ENCODE measurements at regions of chr5 and their contacts with region 1.

Region 1: GRCh38 chr5:56415356-56415765 is 182.2 kb upstream of the ANKRD55 start:
- DNase-seq: peak; percentile 89
- ATAC-seq: peak; percentile 71
- H3K4me3 ChIP-seq: peak overlapping the region in 3 of 5 experiments; percentile 21 to 56 (median 21)
- H3K4me3 Mint-ChIP-seq: peak overlapping the region; percentile 76
- H3K27ac ChIP-seq: peak overlapping the region; percentile 95 to 98
- H3K27ac Mint-ChIP-seq: peak overlapping the region; percentile 96
- H3K4me1 ChIP-seq: peaks cover 73 to 74% of the 10 kb centered on the region in 2 donors
- H3K4me1 Mint-ChIP-seq: peaks cover 80% of the 10 kb centered on the region
- H3K27me3 ChIP-seq: no peaks in the 10 kb centered on the region
- H3K27me3 Mint-ChIP-seq: no peaks in the 10 kb centered on the region
- CTCF ChIP-seq: no peak

Region 2: GRCh38 chr5:56142620-56143372 is 272.6 kb before region 1 on chr5:
- CTCF ChIA-PET with region 1: no interaction called
- POLR2A ChIA-PET with region 1: no interaction called
- intact Hi-C with region 1: no loop called
- DNase-seq: no peak
- ATAC-seq: no peak
- H3K4me3 ChIP-seq: no peak overlapping the region
- H3K4me3 Mint-ChIP-seq: no peak overlapping the region
- H3K27ac ChIP-seq: no peak overlapping the region
- H3K27ac Mint-ChIP-seq: no peak overlapping the region
- H3K4me1 ChIP-seq: peaks cover 0 to 2% of the 10 kb centered on the region in 2 donors
- H3K4me1 Mint-ChIP-seq: no peaks in the 10 kb centered on the region
- H3K27me3 ChIP-seq: no peaks in the 10 kb centered on the region
- H3K27me3 Mint-ChIP-seq: peaks cover 11% of the 10 kb centered on the region
- CTCF ChIP-seq: no peak

Region 3: DNA sequence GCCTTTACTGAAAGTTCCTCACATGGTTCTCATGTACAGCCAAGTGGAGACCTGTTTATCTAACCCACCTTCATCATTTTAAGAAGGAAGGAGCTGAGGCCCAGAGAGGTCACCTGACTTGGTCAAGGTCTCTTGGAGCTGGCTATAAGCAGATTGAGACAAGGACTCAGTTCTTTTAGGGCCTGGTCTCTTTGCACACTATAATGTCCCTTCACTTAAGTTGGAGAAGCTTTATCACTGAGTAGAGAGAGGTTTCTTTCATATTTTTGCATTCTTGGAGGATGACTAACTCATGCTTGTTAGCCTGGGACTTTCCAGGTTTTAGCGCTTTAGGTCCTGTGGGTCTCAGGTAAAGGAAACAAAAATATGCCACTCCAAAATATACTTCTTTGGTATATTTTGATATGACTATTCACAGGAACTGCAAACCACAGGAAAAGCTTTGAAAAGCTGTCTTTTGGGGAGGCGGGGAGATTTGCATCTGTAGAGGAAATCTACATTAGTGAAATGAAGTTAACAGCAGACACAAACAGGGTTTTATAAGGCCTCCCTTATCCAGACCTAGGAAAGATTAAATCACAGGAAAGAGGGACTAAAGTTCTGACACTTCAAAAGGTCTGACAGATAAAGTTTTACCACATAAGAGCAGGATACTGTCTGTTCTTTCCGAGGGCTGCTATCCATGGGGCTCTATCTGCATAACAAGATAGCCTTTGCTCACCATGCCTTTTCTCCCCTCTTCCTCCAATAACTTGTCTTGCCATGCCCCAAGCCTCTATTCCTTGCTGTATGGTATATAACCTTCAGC is 86.4 kb before region 1 on chr5:
- CTCF ChIA-PET with region 1: interaction called, 3 read pairs
- POLR2A ChIA-PET with region 1: interaction called, 3 read pairs
- intact Hi-C with region 1: loop called (anchors 5 kb)
- DNase-seq: peak; percentile 59
- ATAC-seq: peak; percentile 76
- H3K4me3 ChIP-seq: peak overlapping the region in 1 of 5 experiments; percentile 46
- H3K4me3 Mint-ChIP-seq: peak overlapping the region; percentile 47
- H3K27ac ChIP-seq: peak overlapping the region; percentile 77 to 92
- H3K27ac Mint-ChIP-seq: peak overlapping the region; percentile 91
- H3K4me1 ChIP-seq: peaks cover 41 to 47% of the 10 kb centered on the region in 2 donors
- H3K4me1 Mint-ChIP-seq: peaks cover 60% of the 10 kb centered on the region
- H3K27me3 ChIP-seq: no peaks in the 10 kb centered on the region
- H3K27me3 Mint-ChIP-seq: no peaks in the 10 kb centered on the region
- CTCF ChIP-seq: no peak

Region 4: GRCh38 chr5:56565644-56566043 is 150.3 kb after region 1 on chr5:
- CTCF ChIA-PET with region 1: no interaction called
- POLR2A ChIA-PET with region 1: no interaction called
- intact Hi-C with region 1: loop called (anchors 2 kb)
- DNase-seq: peak; percentile 82
- ATAC-seq: peak; percentile 97
- H3K4me3 ChIP-seq: peak overlapping the region in 3 of 5 experiments; percentile 6 to 20 (median 9)
- H3K4me3 Mint-ChIP-seq: peak overlapping the region; percentile 56
- H3K27ac ChIP-seq: no peak overlapping the region
- H3K27ac Mint-ChIP-seq: peak overlapping the region; percentile 69
- H3K4me1 ChIP-seq: peaks cover 34 to 35% of the 10 kb centered on the region in 2 donors
- H3K4me1 Mint-ChIP-seq: peaks cover 41% of the 10 kb centered on the region
- H3K27me3 ChIP-seq: no peaks in the 10 kb centered on the region
- H3K27me3 Mint-ChIP-seq: no peaks in the 10 kb centered on the region
- CTCF ChIP-seq: no peak

Region 5: DNA sequence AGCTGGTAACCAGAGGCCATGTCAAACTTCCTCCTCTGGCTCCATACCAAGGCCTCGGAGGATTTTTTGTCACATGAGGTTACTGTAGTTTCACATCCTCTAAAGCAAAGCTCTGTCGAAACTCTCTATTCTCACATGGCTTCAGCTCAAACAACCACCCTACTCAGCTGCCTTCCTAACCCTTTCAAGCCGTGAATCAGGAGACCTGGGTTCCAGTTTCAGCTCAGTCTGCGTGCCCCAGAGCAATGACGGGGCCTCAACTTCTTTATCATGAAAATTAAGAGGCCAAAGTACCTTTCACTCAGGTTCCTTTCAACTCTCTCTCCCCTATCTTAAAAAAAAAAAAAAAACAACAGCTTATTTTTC is 254.7 kb after region 1 on chr5:
- CTCF ChIA-PET with region 1: interaction called, 3 read pairs
- POLR2A ChIA-PET with region 1: interaction called, 5 read pairs
- intact Hi-C with region 1: loop called (anchors 2 kb)
- DNase-seq: peak; percentile 95
- ATAC-seq: no peak
- H3K4me3 ChIP-seq: no peak overlapping the region
- H3K4me3 Mint-ChIP-seq: peak overlapping the region; percentile 75
- H3K27ac ChIP-seq: peak overlapping the region; percentile 97 to 98
- H3K27ac Mint-ChIP-seq: peak overlapping the region; percentile 97
- H3K4me1 ChIP-seq: peaks cover 58% of the 10 kb centered on the region in 2 donors
- H3K4me1 Mint-ChIP-seq: peaks cover 74% of the 10 kb centered on the region
- H3K27me3 ChIP-seq: no peaks in the 10 kb centered on the region
- H3K27me3 Mint-ChIP-seq: no peaks in the 10 kb centered on the region
- CTCF ChIP-seq: no peak

Region 6: GRCh38 chr5:56814963-56815658 is 399.8 kb after region 1 on chr5 and contains the start of gene MAP3K1:
- CTCF ChIA-PET with region 1: interaction called, 3 read pairs
- POLR2A ChIA-PET with region 1: no interaction called
- intact Hi-C with region 1: loop called (anchors 1 kb)
- DNase-seq: peak; percentile 93
- ATAC-seq: peak; percentile 65
- H3K4me3 ChIP-seq: peak within 1 kb of the TSS; percentile 73 to 97 (median 87)
- H3K4me3 Mint-ChIP-seq: peak within 1 kb of the TSS; percentile 97
- H3K27ac ChIP-seq: peak within 1 kb of the TSS; percentile 91 to 94
- H3K27ac Mint-ChIP-seq: peak within 1 kb of the TSS; percentile 99
- H3K4me1 ChIP-seq: peaks cover 25 to 29% of the 10 kb centered on the region in 2 donors
- H3K4me1 Mint-ChIP-seq: peaks cover 44% of the 10 kb centered on the region
- H3K27me3 ChIP-seq: no peaks in the 10 kb centered on the region
- H3K27me3 Mint-ChIP-seq: no peaks in the 10 kb centered on the region
- CTCF ChIP-seq: no peak
- total RNA-seq, gene MAP3K1: 160 and 164 TPM in 2 replicates

Region 7: DNA sequence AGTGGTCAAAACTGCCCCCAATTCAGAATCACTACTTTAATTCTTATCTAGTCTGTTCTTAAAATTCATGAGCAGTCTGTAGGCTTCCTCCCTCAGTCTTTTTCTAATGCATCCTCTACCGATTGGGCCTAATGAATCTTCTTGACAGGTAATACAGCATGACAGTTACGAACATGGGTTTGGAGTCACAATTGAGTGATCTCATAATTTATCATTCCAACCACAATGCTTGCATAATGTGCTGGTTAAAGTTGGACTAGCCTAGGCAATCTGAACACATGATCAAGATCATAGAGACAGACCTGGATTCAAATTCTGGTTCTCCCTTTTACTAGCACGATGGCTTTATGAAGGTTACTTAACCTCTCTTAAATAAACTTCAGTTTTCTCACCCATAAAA is 461.0 kb after region 1 on chr5:
- CTCF ChIA-PET with region 1: no interaction called
- POLR2A ChIA-PET with region 1: no interaction called
- intact Hi-C with region 1: no loop called
- DNase-seq: no peak
- ATAC-seq: no peak
- H3K4me3 ChIP-seq: no peak overlapping the region
- H3K4me3 Mint-ChIP-seq: no peak overlapping the region
- H3K27ac ChIP-seq: peak overlapping the region in 1 of 2 donors; percentile 39
- H3K27ac Mint-ChIP-seq: no peak overlapping the region
- H3K4me1 ChIP-seq: peaks cover 10 to 20% of the 10 kb centered on the region in 2 donors
- H3K4me1 Mint-ChIP-seq: peaks cover 25% of the 10 kb centered on the region
- H3K27me3 ChIP-seq: no peaks in the 10 kb centered on the region
- H3K27me3 Mint-ChIP-seq: no peaks in the 10 kb centered on the region
- CTCF ChIP-seq: no peak